ENCODE measurements at regions of chr1 and their contacts with region 1.

Region 1: GRCh38 chr1:154463512-154463990 is 38.5 kb upstream of the TDRD10 start:
- DNase-seq: peak; percentile 86
- ATAC-seq: peak; percentile 87
- H3K4me3 Mint-ChIP-seq: peak overlapping the region; percentile 34
- H3K27ac Mint-ChIP-seq: peak overlapping the region; percentile 76
- H3K4me1 Mint-ChIP-seq: peaks cover 83% of the 10 kb centered on the region
- H3K27me3 Mint-ChIP-seq: no peaks in the 10 kb centered on the region

Region 2: GRCh38 chr1:154288661-154289060 is 174.9 kb before region 1 on chr1:
- CTCF ChIA-PET with region 1: no interaction called
- POLR2A ChIA-PET with region 1: no interaction called
- intact Hi-C with region 1: no loop called
- DNase-seq: no peak
- ATAC-seq: no peak
- H3K4me3 Mint-ChIP-seq: no peak overlapping the region
- H3K27ac Mint-ChIP-seq: no peak overlapping the region
- H3K4me1 Mint-ChIP-seq: no peaks in the 10 kb centered on the region
- H3K27me3 Mint-ChIP-seq: no peaks in the 10 kb centered on the region

Region 3: GRCh38 chr1:154352581-154353459 is 110.7 kb before region 1 on chr1:
- CTCF ChIA-PET with region 1: interaction called, 3 read pairs
- POLR2A ChIA-PET with region 1: no interaction called
- intact Hi-C with region 1: loop called in 1 of 2 experiments (anchors 1 kb)
- DNase-seq: peak; percentile 80
- ATAC-seq: peak; percentile 84
- H3K4me3 Mint-ChIP-seq: peak overlapping the region; percentile 72
- H3K27ac Mint-ChIP-seq: peak overlapping the region; percentile 81
- H3K4me1 Mint-ChIP-seq: peaks cover 32% of the 10 kb centered on the region
- H3K27me3 Mint-ChIP-seq: no peaks in the 10 kb centered on the region